ENCODE measurements at regions of chr4 and their contacts with region 1.

Region 1: GRCh38 chr4:105471566-105472176 is 2.2 kb downstream of the PPA2 start:
- DNase-seq: no peak

Region 2: GRCh38 chr4:105146276-105147015 is 325.2 kb before region 1 on chr4 and contains the start of gene TET2:
- intact Hi-C with region 1: loop called in 1 of 2 experiments (anchors 5 kb)
- DNase-seq: peak; percentile 93
- total RNA-seq, gene TET2: 21.3 to 25.9 TPM

Region 3: DNA sequence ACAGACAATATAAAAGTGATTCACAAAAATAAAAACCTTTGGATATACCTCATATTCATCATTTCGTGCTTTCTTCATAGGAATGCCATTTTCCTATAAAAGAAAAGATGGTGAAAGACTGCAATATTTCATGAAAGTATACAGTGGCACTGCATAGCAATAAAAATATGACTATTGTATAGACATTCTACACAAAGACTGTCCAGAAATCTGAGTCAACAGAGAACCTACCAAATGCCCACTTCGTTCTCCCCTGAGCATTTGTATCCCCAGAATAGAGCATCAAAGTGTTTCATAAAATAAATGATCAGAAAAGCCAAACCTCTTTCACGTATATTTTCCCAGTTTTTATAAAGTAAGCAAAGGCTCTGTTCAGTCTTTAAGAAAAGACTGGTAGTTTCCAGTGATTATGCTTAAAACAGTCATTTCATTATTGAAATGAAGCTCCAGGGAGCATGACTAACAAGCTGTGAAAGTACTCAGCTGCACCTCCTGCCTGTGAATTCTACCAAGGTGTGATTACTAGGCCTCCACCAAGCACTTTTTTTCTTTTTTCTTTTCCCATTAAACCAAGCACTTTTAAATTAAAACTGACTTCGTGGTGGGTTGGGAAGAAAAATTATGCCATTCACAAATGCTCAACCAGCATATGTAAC is 18.0 kb before region 1 on chr4:
- intact Hi-C with region 1: no loop called
- DNase-seq: no peak

Region 4: DNA sequence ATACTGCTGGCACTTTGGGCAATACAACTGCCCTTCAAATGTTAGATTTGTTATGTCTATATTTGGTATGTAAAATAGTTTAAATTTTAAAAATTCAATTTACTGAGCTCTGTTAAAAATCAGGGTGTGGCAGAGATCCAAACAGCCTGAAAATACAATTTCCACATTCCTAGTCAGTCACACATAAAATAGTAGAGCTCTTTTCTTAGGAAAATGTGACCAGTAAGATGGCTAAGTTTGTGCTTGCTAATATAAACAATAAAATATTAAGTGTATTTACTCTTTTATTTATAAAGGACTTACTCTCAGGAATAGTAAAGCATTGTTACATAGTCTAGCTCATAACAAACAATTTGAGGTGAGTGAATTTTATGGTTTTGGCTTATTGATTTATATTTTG is 1364.2 kb after region 1 on chr4:
- intact Hi-C with region 1: no loop called
- DNase-seq: no peak